Activated naive CD4-positive, alpha-beta T cell treated with anti-CD3 and anti-CD28 coated beads for 36 hours (primary cell): ENCODE measurements at regions of chr15 and their contacts with region 1.

Region 1: DNA sequence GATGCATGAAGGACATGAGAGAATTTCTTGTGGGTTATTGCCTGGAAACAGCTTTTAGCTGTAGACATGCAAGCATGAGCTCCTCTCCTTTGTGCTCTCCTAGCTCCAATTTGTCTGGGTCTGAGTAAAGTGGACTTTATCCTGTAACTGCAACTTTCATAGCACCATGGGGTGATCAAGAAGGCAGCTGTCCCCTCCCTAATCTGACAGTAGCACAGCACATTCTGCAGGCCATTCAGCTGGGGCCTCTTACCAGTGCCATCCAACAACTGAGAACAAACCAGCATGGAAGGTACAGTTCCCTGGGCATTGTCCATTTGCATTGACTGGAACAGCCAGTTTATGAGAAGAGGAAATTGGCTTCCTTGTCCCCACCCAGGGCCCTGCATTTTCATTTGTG is 7.7 kb upstream of the RAB27A start:
- DNase-seq: no peak
- H3K4me3 Mint-ChIP-seq: no peak overlapping the region
- H3K27ac Mint-ChIP-seq: no peak overlapping the region
- H3K4me1 Mint-ChIP-seq: no peaks in the 10 kb centered on the region
- H3K27me3 Mint-ChIP-seq: no peaks in the 10 kb centered on the region

Region 2: GRCh38 chr15:54089791-54090190 is 1207.5 kb before region 1 on chr15:
- CTCF ChIA-PET with region 1: no interaction called
- intact Hi-C with region 1: loop called (anchors 5 kb)
- DNase-seq: no peak
- H3K4me3 Mint-ChIP-seq: no peak overlapping the region
- H3K27ac Mint-ChIP-seq: no peak overlapping the region
- H3K4me1 Mint-ChIP-seq: no peaks in the 10 kb centered on the region
- H3K27me3 Mint-ChIP-seq: peaks cover 6% of the 10 kb centered on the region

Region 3: GRCh38 chr15:54810031-54810430 is 487.3 kb before region 1 on chr15:
- CTCF ChIA-PET with region 1: no interaction called
- intact Hi-C with region 1: no loop called
- DNase-seq: no peak
- H3K4me3 Mint-ChIP-seq: no peak overlapping the region
- H3K27ac Mint-ChIP-seq: no peak overlapping the region
- H3K4me1 Mint-ChIP-seq: no peaks in the 10 kb centered on the region
- H3K27me3 Mint-ChIP-seq: peaks cover 6% of the 10 kb centered on the region